CD4-positive, alpha-beta memory T cell (primary cell): ENCODE measurements at regions of chr9 and their contacts with region 1.

Region 1: GRCh38 chr9:79571309-79572031 is at the start of gene TLE4:
- DNase-seq: peak; percentile 99 to 100 (median 100)
- H3K4me3 ChIP-seq: peak within 1 kb of the TSS; percentile 66 to 69
- H3K4me3 Mint-ChIP-seq: peak within 1 kb of the TSS; percentile 63 to 96 (median 78)
- H3K27ac ChIP-seq: peak within 1 kb of the TSS; percentile 85
- H3K27ac Mint-ChIP-seq: peak within 1 kb of the TSS in 6 of 7 donors; percentile 43 to 95 (median 79)
- H3K4me1 ChIP-seq: peaks cover 37% of the 10 kb centered on the region
- H3K4me1 Mint-ChIP-seq: peaks cover 24 to 37% (median 27%) of the 10 kb centered on the region in 4 donors
- H3K27me3 ChIP-seq: peaks cover 8% of the 10 kb centered on the region
- H3K27me3 Mint-ChIP-seq: peaks cover 6% of the 10 kb centered on the region in 2 donors
- total RNA-seq, gene TLE4: 98.6 to 101 TPM

Region 2: DNA sequence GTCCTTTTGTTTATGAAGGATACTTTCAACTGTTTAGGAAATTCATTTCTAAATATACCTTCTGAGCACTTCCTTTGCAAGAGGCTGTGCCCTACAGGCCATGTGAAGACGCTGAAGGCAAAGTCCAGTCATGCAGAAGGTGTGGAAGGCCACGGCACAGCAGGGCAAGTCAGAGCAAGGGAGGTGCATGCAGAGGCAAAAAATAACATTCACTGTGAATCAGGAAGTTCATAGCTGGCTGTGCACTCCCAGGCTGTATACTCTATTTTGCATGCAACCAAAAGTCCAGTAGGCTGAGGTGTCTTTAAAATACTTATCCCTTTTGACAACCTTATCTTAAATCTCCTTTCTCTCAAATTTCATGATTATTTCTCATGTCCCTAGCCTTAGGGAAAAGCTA is 1590.1 kb before region 1 on chr9:
- CTCF ChIA-PET with region 1: no interaction called
- POLR2A ChIA-PET with region 1: no interaction called
- intact Hi-C with region 1: no loop called
- DNase-seq: no peak
- H3K4me3 ChIP-seq: no peak overlapping the region
- H3K4me3 Mint-ChIP-seq: peak overlapping the region in 6 of 8 donors; percentile 10 to 73 (median 54)
- H3K27ac ChIP-seq: no peak overlapping the region
- H3K27ac Mint-ChIP-seq: peak overlapping the region in 5 of 7 donors; percentile 18 to 78 (median 53)
- H3K4me1 ChIP-seq: peaks cover 59% of the 10 kb centered on the region
- H3K4me1 Mint-ChIP-seq: peaks cover 57 to 88% (median 74%) of the 10 kb centered on the region in 4 donors
- H3K27me3 ChIP-seq: no peaks in the 10 kb centered on the region
- H3K27me3 Mint-ChIP-seq: no peaks in the 10 kb centered on the region

Region 3: DNA sequence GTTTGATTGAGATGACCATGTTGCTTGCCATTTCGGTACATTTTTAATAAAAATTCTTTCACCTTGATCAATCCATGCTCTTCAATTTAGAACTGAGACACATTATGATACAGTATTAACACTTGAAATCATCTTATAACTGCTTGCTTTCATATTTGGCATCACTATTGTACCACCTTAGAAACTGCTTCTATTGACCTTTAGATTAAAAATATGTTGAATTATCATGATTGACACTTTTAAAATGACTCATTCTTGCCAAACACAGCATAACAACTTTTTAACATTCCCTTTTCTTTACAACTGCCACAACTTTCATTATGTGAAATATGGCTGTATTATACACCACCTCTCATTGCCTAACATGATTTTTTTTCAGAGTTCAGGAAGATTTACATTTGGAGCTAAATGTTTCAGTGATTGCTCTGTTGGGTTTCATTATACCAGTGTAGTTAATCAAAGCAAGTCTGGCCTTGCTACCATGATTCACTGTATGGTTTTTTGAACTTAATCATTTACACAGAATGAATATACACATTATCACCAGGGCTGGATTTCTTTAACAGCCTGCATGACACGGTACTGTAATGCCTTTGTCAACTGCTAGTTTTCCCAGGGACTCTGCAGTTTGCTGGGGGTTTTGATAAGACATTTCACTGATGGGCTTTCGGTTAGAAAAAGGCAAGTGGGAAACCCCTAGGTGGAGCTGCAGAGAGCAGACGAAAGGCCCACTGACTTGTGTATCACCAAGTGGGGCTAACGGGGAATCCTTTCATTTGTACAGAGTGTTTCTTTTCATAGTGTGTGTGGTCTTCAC is 93.3 kb before region 1 on chr9:
- CTCF ChIA-PET with region 1: no interaction called
- POLR2A ChIA-PET with region 1: no interaction called
- intact Hi-C with region 1: loop called (anchors 5 kb)
- DNase-seq: peak in 3 of 5 donors; percentile 9 to 16 (median 15)
- H3K4me3 ChIP-seq: no peak overlapping the region
- H3K4me3 Mint-ChIP-seq: no peak overlapping the region
- H3K27ac ChIP-seq: no peak overlapping the region
- H3K27ac Mint-ChIP-seq: peak overlapping the region in 2 of 7 donors; percentile 3 to 10
- H3K4me1 ChIP-seq: no peaks in the 10 kb centered on the region
- H3K4me1 Mint-ChIP-seq: peaks cover 0 to 4% (median under 1%) of the 10 kb centered on the region in 4 donors
- H3K27me3 ChIP-seq: no peaks in the 10 kb centered on the region
- H3K27me3 Mint-ChIP-seq: no peaks in the 10 kb centered on the region

Region 4: DNA sequence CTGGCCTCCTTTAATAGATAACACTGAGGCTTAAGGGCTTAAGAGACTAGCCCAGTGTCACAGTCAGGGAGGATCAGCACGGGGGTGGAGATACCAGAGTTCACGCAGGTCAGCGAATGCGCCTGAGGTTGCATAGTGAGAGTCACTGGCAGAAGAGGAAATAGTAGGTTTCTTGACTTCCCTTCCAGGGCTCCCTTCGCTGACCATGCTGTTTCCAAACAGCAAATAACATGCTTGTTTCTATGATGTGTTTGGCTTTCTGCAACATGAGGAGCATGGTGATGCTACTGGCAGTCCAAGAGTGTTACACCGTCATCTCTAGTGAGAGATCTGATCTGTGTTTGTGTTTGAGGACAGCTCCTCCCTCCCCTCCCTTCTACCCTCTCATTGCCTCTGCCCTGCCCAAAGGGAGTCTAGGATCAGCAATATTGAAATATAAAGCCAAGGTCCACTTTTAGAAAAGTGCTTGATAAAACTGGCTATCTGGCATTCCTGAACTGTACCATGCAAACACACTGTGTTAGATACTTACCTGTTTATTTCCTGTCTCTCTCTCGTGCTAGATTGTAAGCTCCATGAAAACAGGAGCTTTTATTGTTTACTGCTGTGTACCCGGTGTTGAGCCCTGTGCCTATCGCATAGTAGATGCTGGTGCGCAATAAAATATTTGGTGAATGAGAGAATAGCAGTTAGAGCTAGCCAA is 12.6 kb after region 1 on chr9:
- CTCF ChIA-PET with region 1: interaction called, 23 read pairs
- POLR2A ChIA-PET with region 1: interaction called, 106 read pairs
- intact Hi-C with region 1: loop called (anchors 1 kb)
- DNase-seq: peak; percentile 16 to 42 (median 24)
- H3K4me3 ChIP-seq: no peak overlapping the region
- H3K4me3 Mint-ChIP-seq: peak overlapping the region in 7 of 8 donors; percentile 53 to 78 (median 67)
- H3K27ac ChIP-seq: no peak overlapping the region
- H3K27ac Mint-ChIP-seq: peak overlapping the region; percentile 20 to 93 (median 81)
- H3K4me1 ChIP-seq: peaks cover 62% of the 10 kb centered on the region
- H3K4me1 Mint-ChIP-seq: peaks cover 62 to 79% (median 71%) of the 10 kb centered on the region in 4 donors
- H3K27me3 ChIP-seq: no peaks in the 10 kb centered on the region
- H3K27me3 Mint-ChIP-seq: no peaks in the 10 kb centered on the region

Region 5: GRCh38 chr9:79623799-79624721 is 52.6 kb after region 1 on chr9:
- CTCF ChIA-PET with region 1: interaction called, 7 read pairs
- POLR2A ChIA-PET with region 1: interaction called, 27 read pairs
- intact Hi-C with region 1: loop called (anchors 1 kb)
- DNase-seq: peak; percentile 38 to 67 (median 50)
- H3K4me3 ChIP-seq: no peak overlapping the region
- H3K4me3 Mint-ChIP-seq: peak overlapping the region in 7 of 8 donors; percentile 43 to 83 (median 73)
- H3K27ac ChIP-seq: peak overlapping the region; percentile 1
- H3K27ac Mint-ChIP-seq: peak overlapping the region; percentile 80 to 94 (median 88)
- H3K4me1 ChIP-seq: peaks cover 27% of the 10 kb centered on the region
- H3K4me1 Mint-ChIP-seq: peaks cover 37 to 75% (median 53%) of the 10 kb centered on the region in 4 donors
- H3K27me3 ChIP-seq: no peaks in the 10 kb centered on the region
- H3K27me3 Mint-ChIP-seq: no peaks in the 10 kb centered on the region

Region 6: GRCh38 chr9:79639354-79639753 is 67.9 kb after region 1 on chr9:
- CTCF ChIA-PET with region 1: interaction called, 3 read pairs
- POLR2A ChIA-PET with region 1: interaction called, 22 read pairs
- intact Hi-C with region 1: no loop called
- DNase-seq: no peak
- H3K4me3 ChIP-seq: no peak overlapping the region
- H3K4me3 Mint-ChIP-seq: peak overlapping the region in 3 of 8 donors; percentile 36 to 73 (median 64)
- H3K27ac ChIP-seq: no peak overlapping the region
- H3K27ac Mint-ChIP-seq: peak overlapping the region in 1 of 7 donors; percentile 54
- H3K4me1 ChIP-seq: peaks cover 45% of the 10 kb centered on the region
- H3K4me1 Mint-ChIP-seq: peaks cover 45 to 85% (median 62%) of the 10 kb centered on the region in 4 donors
- H3K27me3 ChIP-seq: no peaks in the 10 kb centered on the region
- H3K27me3 Mint-ChIP-seq: no peaks in the 10 kb centered on the region

Region 7: GRCh38 chr9:79694676-79695400 is 123.4 kb after region 1 on chr9:
- CTCF ChIA-PET with region 1: no interaction called
- POLR2A ChIA-PET with region 1: interaction called, 3 read pairs
- intact Hi-C with region 1: loop called (anchors 5 kb)
- DNase-seq: no peak
- H3K4me3 ChIP-seq: no peak overlapping the region
- H3K4me3 Mint-ChIP-seq: peak overlapping the region in 1 of 8 donors; percentile 52
- H3K27ac ChIP-seq: no peak overlapping the region
- H3K27ac Mint-ChIP-seq: peak overlapping the region in 4 of 7 donors; percentile 23 to 84 (median 54)
- H3K4me1 ChIP-seq: peaks cover 31% of the 10 kb centered on the region
- H3K4me1 Mint-ChIP-seq: peaks cover 56 to 80% (median 70%) of the 10 kb centered on the region in 4 donors
- H3K27me3 ChIP-seq: no peaks in the 10 kb centered on the region
- H3K27me3 Mint-ChIP-seq: no peaks in the 10 kb centered on the region

Region 8: DNA sequence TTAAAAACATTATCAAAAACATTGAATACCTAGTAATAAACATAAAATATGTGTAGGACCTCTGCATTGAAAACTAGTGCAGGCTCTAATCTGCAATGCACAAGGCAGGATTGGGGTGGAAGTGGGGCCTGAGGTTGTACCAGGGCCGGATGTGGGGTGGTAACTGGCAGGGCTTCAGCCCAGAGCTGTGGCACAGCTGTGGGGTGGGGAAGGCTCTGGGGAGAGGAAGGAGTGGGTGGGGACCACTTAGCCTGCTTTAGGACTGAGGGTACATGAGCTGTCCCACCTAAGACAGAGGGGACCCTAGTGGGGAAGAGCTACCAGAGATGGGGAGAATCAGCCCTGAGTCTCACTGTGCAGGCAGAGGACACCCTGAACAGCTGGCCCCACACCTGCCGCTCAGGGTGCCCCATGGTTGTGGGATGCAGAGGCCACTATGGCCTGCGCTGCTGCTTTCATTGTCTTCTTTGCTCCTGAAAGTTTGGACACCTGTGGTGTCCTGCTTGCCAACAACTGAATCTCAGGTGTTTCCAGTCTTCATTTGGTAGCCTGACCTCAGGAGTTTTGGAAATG is 311.7 kb after region 1 on chr9:
- CTCF ChIA-PET with region 1: no interaction called
- POLR2A ChIA-PET with region 1: interaction called, 14 read pairs
- intact Hi-C with region 1: loop called (anchors 5 kb)
- DNase-seq: peak; percentile 37 to 57 (median 52)
- H3K4me3 ChIP-seq: no peak overlapping the region
- H3K4me3 Mint-ChIP-seq: peak overlapping the region in 7 of 8 donors; percentile 71 to 86 (median 76)
- H3K27ac ChIP-seq: no peak overlapping the region
- H3K27ac Mint-ChIP-seq: peak overlapping the region in 3 of 7 donors; percentile 36 to 60 (median 39)
- H3K4me1 ChIP-seq: peaks cover 30% of the 10 kb centered on the region
- H3K4me1 Mint-ChIP-seq: peaks cover 29 to 60% (median 47%) of the 10 kb centered on the region in 4 donors
- H3K27me3 ChIP-seq: no peaks in the 10 kb centered on the region
- H3K27me3 Mint-ChIP-seq: no peaks in the 10 kb centered on the region